Activated CD4-positive, alpha-beta T cell treated with anti-CD3 and anti-CD28 coated beads, Interleukin-2, amount 10 ng/mL, durations not matched to agents 24 days and 14 days (primary cell): ENCODE measurements at regions of chr11 and their contacts with region 1.

Region 1: DNA sequence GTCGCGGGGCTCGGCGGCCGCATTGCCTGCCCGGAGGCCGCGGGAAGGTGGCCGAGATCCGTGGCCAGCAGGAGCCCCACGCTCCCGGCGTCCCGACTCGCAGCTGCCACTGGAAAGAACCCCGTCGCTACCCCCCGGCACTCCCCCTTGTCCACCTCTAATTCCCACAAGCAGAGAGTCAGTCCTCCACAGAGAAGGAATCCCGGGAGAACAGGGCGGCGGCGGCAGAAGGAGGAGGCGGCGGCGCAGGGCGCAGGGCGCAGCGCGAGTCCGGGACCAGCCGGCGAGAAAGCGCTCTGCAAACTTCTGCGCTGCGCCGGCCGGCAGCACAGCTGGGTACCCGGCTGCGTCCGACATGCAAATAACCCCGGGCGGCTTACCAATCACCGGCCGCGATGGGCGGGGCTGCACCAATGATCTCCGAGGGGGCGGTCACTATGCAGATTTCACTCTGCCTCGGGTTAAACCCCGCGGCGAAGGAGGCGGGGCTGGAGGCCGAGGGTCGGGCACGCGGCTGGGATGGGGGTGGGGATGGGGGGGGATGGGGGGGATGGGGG is at the start of gene ABTB2:
- DNase-seq: peak; percentile 99
- H3K4me3 Mint-ChIP-seq: peak within 1 kb of the TSS; percentile 83
- H3K27ac Mint-ChIP-seq: peak within 1 kb of the TSS; percentile 70
- H3K4me1 Mint-ChIP-seq: peaks cover 27% of the 10 kb centered on the region
- H3K27me3 Mint-ChIP-seq: peaks cover 48% of the 10 kb centered on the region
- total RNA-seq, gene ABTB2: 13.1 and 14.1 TPM in 2 replicates

Region 2: GRCh38 chr11:33996498-33997454 is 361.0 kb before region 1 on chr11:
- intact Hi-C with region 1: loop called (anchors 1 kb)
- DNase-seq: peak; percentile 93
- H3K4me3 Mint-ChIP-seq: peak overlapping the region; percentile 30
- H3K27ac Mint-ChIP-seq: no peak overlapping the region
- H3K4me1 Mint-ChIP-seq: peaks cover 8% of the 10 kb centered on the region
- H3K27me3 Mint-ChIP-seq: peaks cover 29% of the 10 kb centered on the region

Region 3: GRCh38 chr11:34105079-34105956 is 252.5 kb before region 1 on chr11 and contains the start of gene NAT10:
- intact Hi-C with region 1: loop called (anchors 1 kb)
- DNase-seq: peak; percentile 99
- H3K4me3 Mint-ChIP-seq: peak within 1 kb of the TSS; percentile 97
- H3K27ac Mint-ChIP-seq: peak within 1 kb of the TSS; percentile 90
- H3K4me1 Mint-ChIP-seq: peaks cover 47% of the 10 kb centered on the region
- H3K27me3 Mint-ChIP-seq: peaks cover 3% of the 10 kb centered on the region
- total RNA-seq, gene NAT10: 162 and 169 TPM in 2 replicates

Region 4: DNA sequence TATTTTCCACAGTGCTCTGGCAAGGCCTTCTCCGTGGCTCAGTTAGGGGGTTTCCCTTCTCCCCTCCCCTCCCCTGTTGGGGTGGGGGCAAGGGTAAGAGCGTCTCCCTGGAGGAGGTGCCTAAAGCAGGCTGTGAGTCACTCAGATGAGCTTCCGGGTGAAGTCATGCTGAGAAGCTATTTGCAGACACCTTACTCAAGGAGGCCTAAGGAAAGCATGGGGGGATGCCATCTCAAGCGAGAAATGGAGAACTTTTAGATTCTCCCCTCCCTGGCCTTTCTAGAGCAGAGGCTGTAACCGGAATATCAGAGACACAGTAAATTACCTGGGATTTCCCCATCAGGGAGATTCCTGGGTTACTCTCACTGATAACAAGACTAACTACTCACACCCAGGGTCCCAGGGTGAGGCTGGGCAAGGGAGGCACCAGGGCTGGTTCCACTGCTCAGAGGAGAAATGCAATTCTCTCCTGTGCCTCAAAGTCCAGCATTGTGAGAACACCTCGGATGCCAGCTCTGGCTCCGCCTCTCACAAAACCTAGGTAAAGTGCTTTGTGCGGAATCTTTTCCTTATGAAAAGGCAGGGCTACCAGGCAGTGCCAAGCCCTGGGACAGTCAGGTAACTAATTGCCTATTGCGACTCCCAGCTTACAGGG is 123.6 kb before region 1 on chr11:
- intact Hi-C with region 1: loop called (anchors 1 kb)
- DNase-seq: peak; percentile 94
- H3K4me3 Mint-ChIP-seq: peak overlapping the region; percentile 30
- H3K27ac Mint-ChIP-seq: peak overlapping the region; percentile 73
- H3K4me1 Mint-ChIP-seq: peaks cover 60% of the 10 kb centered on the region
- H3K27me3 Mint-ChIP-seq: peaks cover 1% of the 10 kb centered on the region

Region 5: GRCh38 chr11:34438529-34439507 is 81.0 kb after region 1 on chr11 and contains the start of gene CAT:
- intact Hi-C with region 1: loop called (anchors 2 kb)
- DNase-seq: peak; percentile 99
- H3K4me3 Mint-ChIP-seq: peak within 1 kb of the TSS; percentile 95
- H3K27ac Mint-ChIP-seq: peak within 1 kb of the TSS; percentile 90
- H3K4me1 Mint-ChIP-seq: peaks cover 17% of the 10 kb centered on the region
- H3K27me3 Mint-ChIP-seq: no peaks in the 10 kb centered on the region
- total RNA-seq, gene CAT: 17.4 and 19.0 TPM in 2 replicates

Region 6: GRCh38 chr11:34916015-34916842 is 558.5 kb after region 1 on chr11 and contains the starts of genes APIP and PDHX:
- intact Hi-C with region 1: loop called (anchors 5 kb)
- DNase-seq: peak; percentile 98
- H3K4me3 Mint-ChIP-seq: peak within 1 kb of the TSS; percentile 98
- H3K27ac Mint-ChIP-seq: peak within 1 kb of the TSS; percentile 95
- H3K4me1 Mint-ChIP-seq: peaks cover 25% of the 10 kb centered on the region
- H3K27me3 Mint-ChIP-seq: no peaks in the 10 kb centered on the region
- total RNA-seq, gene APIP: 26.8 and 29.6 TPM in 2 replicates
- total RNA-seq, gene PDHX: 31.0 and 35.7 TPM in 2 replicates